Tibial artery (tissue), 4 donors: ENCODE measurements at regions of chr18 and their contacts with region 1.

Region 1: GRCh38 chr18:59402432-59403090 is 43.5 kb upstream of the LMAN1 start:
- DNase-seq: peak; percentile 57 to 71
- H3K4me3 ChIP-seq: no peak overlapping the region
- H3K27ac ChIP-seq: no peak overlapping the region
- H3K4me1 ChIP-seq: no peaks in the 10 kb centered on the region
- H3K27me3 ChIP-seq: no peaks in the 10 kb centered on the region
- CTCF ChIP-seq: peak; percentile 84 to 93

Region 2: GRCh38 chr18:59249205-59249774 is 153.3 kb before region 1 on chr18:
- intact Hi-C with region 1: loop called (anchors 5 kb)
- DNase-seq: no peak
- H3K4me3 ChIP-seq: no peak overlapping the region
- H3K27ac ChIP-seq: no peak overlapping the region
- H3K4me1 ChIP-seq: no peaks in the 10 kb centered on the region
- H3K27me3 ChIP-seq: peaks cover 0 to 29% of the 10 kb centered on the region in 2 donors
- CTCF ChIP-seq: peak; percentile 52 to 68

Region 3: DNA sequence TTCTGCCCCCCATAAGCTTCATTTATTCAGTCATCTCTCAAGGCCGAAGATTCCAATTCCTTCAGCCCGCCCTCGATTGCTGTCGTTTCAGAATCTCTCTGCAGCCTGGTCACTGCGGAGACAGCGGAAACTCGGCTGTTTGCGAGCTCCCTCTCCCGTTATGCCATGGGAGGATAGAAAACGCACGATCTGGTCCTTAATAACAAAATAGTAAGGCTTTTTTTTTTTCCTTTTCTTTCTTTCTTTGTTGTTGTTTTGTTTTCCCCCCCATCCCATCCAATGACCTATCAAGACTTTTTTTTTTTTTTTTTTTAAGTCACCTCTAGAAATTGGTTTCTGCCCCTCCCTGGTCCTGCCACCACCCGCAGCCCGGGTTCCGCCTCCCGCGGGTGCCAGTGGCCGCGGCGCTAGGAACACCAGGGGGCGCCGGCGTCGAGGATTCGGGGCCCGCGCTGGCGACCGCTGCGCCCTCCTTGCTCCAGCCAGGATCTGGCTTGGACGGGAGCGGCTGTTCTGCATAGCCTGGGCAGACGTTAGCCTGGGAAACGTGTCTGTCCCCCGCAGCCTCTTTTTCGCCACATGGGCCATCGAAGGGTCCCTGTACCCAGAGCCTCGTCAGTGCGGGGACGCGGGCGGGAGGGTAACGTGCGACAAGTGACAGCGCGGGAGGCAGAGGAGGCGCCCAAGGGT is 94.2 kb before region 1 on chr18:
- intact Hi-C with region 1: loop called (anchors 5 kb)
- DNase-seq: peak; percentile 66 to 77
- H3K4me3 ChIP-seq: peak overlapping the region in 1 of 2 donors; percentile 17
- H3K27ac ChIP-seq: no peak overlapping the region
- H3K4me1 ChIP-seq: peaks cover 0 to 7% (median 2%) of the 10 kb centered on the region in 4 donors
- H3K27me3 ChIP-seq: peaks cover 0 to 38% of the 10 kb centered on the region in 2 donors
- CTCF ChIP-seq: peak; percentile 65 to 70